ENCODE measurements at regions of chr2 and their contacts with region 1.

Region 1: DNA sequence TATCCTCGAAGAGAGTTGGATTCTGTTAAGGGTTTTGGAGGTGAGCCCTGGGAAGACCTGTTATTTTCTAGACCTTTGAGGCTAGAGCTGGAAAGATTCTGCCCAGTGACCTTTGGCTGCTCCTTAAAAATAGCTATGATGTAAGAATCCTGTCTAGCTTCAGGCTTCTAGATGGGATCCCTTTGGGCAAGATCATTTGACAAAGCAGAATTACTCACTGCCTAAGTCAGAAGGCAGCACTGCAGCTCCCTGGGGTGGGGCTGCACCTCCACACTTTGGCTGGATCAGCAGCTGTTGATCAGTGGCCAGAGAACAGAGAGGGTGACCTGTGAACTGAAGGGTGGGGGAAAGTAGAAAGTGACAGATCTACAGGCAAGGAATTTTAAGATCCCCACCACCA is 103.8 kb downstream of the ASAP2 start:
- DNase-seq: peak; percentile 88
- H3K4me3 Mint-ChIP-seq: peak overlapping the region; percentile 39
- H3K27ac Mint-ChIP-seq: peak overlapping the region; percentile 85
- H3K4me1 Mint-ChIP-seq: peaks cover 54% of the 10 kb centered on the region
- H3K27me3 Mint-ChIP-seq: no peaks in the 10 kb centered on the region
- CTCF ChIP-seq: no peak

Region 2: GRCh38 chr2:9168821-9169221 is 141.6 kb before region 1 on chr2:
- CTCF ChIA-PET with region 1: no interaction called
- POLR2A ChIA-PET with region 1: no interaction called
- intact Hi-C with region 1: no loop called
- DNase-seq: no peak
- H3K4me3 Mint-ChIP-seq: no peak overlapping the region
- H3K27ac Mint-ChIP-seq: no peak overlapping the region
- H3K4me1 Mint-ChIP-seq: peaks cover 15% of the 10 kb centered on the region
- H3K27me3 Mint-ChIP-seq: no peaks in the 10 kb centered on the region
- CTCF ChIP-seq: no peak

Region 3: DNA sequence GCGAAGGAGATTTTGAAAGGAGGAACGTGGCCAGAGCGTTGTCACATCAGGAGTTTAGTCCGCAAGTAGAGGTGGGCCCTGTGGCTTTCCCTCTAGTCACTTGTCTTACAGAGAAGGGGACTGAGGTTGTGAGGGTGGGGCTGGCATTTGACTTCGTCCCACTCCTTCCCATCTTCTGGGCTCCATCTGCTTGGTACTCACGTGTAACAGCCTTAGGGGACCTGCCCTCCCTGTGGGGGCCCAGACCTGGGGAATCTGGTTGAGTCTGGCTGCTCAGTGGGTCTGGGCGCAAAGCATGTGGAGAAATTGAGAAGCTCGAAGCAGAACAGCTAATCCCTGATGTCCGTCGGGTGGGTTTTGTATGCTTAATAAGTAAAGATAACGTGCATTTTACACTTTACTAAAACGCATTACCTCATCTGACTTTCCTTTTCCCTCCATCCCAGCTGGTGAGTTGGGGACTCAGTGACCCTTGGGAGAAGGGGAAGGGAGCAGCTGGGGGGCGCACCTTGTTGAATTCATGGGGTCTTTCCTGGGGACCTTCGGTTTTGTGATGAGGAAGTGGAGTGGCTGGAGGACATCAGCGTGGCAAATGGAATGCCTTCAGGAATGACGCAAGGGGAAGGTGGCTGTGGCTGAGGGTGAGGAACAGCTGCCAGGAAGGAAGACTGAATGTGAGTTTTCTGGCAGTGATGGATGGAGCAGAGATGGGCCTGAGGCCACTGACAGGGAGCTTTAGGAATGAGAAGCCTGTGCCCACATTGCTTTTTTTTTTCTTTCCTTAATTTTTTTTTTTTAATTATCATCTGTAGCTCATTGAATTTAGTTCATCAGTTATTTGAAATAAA is 59.0 kb before region 1 on chr2:
- CTCF ChIA-PET with region 1: no interaction called
- POLR2A ChIA-PET with region 1: interaction called, 25 read pairs
- intact Hi-C with region 1: loop called (anchors 2 kb)
- DNase-seq: peak; percentile 95
- H3K4me3 Mint-ChIP-seq: peak overlapping the region; percentile 65
- H3K27ac Mint-ChIP-seq: peak overlapping the region; percentile 90
- H3K4me1 Mint-ChIP-seq: peaks cover 70% of the 10 kb centered on the region
- H3K27me3 Mint-ChIP-seq: no peaks in the 10 kb centered on the region
- CTCF ChIP-seq: no peak